MCF 10A (cell line): ENCODE measurements at regions of chr2 and their contacts with region 1.

Region 1: GRCh38 chr2:142515493-142515892 is 362.0 kb upstream of the KYNU start:
- DNase-seq: no peak
- H3K4me3 Mint-ChIP-seq: no peak overlapping the region
- H3K27ac Mint-ChIP-seq: no peak overlapping the region
- H3K4me1 Mint-ChIP-seq: no peaks in the 10 kb centered on the region
- H3K27me3 Mint-ChIP-seq: peaks cover 73% of the 10 kb centered on the region
- CTCF ChIP-seq: no peak

Region 2: DNA sequence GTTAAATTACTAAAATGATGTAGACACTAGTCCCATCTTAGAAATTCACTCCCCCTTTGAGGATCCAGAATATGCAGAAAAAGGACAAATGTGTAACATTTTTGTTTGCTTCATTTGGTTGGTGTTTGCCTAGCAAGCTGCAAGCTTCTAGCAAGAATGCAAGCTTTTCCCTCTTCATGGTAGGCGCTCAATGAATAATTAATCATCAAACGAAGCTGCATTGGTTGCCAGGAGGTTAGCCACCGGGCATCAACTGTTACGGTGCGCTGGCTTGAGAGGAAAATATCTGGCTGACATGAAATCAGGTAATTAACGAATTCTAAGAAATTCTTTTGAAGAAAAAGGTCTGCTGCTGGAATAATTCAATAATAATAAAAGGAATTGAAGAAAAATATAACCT is 21.0 kb after region 1 on chr2:
- CTCF ChIA-PET with region 1: no interaction called
- POLR2A ChIA-PET with region 1: no interaction called
- intact Hi-C with region 1: no loop called
- DNase-seq: no peak
- H3K4me3 Mint-ChIP-seq: no peak overlapping the region
- H3K27ac Mint-ChIP-seq: no peak overlapping the region
- H3K4me1 Mint-ChIP-seq: no peaks in the 10 kb centered on the region
- H3K27me3 Mint-ChIP-seq: peaks cover 64% of the 10 kb centered on the region
- CTCF ChIP-seq: no peak

Region 3: DNA sequence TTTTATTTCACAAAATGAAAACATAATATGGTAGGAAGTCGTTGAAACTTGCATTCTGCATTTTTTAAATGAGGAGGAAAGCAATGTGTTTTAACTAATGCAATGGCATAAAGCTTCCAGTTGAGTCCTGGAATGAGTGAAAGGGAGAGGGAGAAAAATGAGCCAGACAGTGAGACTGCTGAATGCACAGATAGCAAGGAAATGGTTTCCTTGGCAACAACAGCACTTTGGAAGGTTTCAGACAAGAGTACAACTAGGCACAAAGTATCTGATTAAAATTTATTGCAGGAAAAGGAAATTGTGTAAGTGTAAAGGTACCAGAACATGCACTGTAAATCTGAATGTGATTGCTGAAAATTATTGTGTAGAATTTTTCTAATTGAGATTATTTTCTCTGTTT is 41.9 kb after region 1 on chr2:
- CTCF ChIA-PET with region 1: no interaction called
- POLR2A ChIA-PET with region 1: no interaction called
- intact Hi-C with region 1: loop called (anchors 5 kb)
- DNase-seq: no peak
- H3K4me3 Mint-ChIP-seq: no peak overlapping the region
- H3K27ac Mint-ChIP-seq: no peak overlapping the region
- H3K4me1 Mint-ChIP-seq: no peaks in the 10 kb centered on the region
- H3K27me3 Mint-ChIP-seq: peaks cover 81% of the 10 kb centered on the region
- CTCF ChIP-seq: no peak